ENCODE measurements at regions of chr3 and their contacts with region 1.

Region 1: DNA sequence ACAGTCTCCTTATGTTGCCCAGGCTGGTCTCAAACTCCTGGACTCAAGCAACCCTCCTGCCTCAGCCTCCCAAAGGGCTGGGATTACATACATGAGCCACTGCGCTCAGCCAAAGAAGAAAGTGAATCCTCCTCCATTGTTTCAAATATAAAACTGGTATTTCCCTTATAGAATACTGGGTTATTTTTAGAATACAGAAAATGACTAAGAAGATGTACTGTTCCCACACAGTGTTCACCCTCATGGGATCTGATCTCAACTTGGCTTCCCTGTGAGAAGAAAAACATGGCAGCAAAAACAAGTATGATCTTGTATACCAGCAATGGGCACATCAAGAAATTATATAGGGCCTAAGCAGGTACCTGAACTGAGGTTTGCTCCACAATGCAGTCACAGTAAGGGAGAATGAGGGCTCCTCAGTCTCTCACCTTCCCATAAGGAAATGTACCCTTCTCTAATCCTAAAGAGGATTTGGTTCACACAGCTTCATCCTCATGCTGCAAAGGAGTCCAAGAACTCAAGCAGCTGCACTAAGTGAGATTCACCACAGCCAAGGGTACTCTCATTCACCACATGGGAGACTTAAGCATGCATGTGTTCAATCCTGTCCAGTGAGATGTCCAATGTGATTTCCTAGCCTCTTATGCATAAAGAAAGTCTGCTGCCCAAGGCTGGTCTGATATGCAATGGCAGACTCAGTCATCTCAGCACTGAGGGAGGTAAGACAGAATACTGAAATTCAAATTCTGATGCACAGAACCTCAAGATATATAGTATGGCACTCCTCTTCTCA is 25.8 kb downstream of the USP4 start:
- H3K4me3 Mint-ChIP-seq: no peak overlapping the region
- H3K27ac Mint-ChIP-seq: no peak overlapping the region
- H3K4me1 Mint-ChIP-seq: peaks cover 6% of the 10 kb centered on the region
- H3K27me3 Mint-ChIP-seq: no peaks in the 10 kb centered on the region

Region 2: GRCh38 chr3:49358217-49358883 is 44.3 kb after region 1 on chr3 and contains the start of gene GPX1:
- intact Hi-C with region 1: no loop called
- H3K4me3 Mint-ChIP-seq: peak within 1 kb of the TSS; percentile 97
- H3K27ac Mint-ChIP-seq: peak within 1 kb of the TSS; percentile 98
- H3K4me1 Mint-ChIP-seq: peaks cover 58% of the 10 kb centered on the region
- H3K27me3 Mint-ChIP-seq: no peaks in the 10 kb centered on the region

Region 3: DNA sequence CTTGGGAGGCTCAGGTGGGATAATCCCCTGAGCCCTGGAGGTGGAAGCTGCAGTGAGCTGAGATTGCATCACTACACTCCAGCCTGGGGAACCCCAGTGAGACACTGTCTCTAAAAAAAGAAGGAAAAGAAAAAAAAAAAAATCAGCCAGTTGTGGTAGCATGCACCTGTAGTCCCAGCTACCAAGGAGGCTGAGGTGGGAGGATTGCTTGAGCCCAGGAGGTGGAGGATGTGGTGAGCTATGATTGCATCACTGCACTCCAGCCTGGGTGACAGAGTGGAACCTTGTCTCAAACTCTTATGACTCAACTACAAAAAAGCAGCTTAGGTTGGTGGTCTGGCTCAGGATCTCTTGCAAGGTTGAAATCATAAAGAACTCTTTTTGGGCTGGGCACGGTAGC is 63.4 kb after region 1 on chr3:
- intact Hi-C with region 1: loop called (anchors 10 kb)
- H3K4me3 Mint-ChIP-seq: no peak overlapping the region
- H3K27ac Mint-ChIP-seq: no peak overlapping the region
- H3K4me1 Mint-ChIP-seq: peaks cover 69% of the 10 kb centered on the region
- H3K27me3 Mint-ChIP-seq: no peaks in the 10 kb centered on the region